Mammary epithelial cell (primary cell): ENCODE measurements at regions of chr10 and their contacts with region 1.

Region 1: GRCh38 chr10:99620713-99621453 is 644 bp upstream of the SLC25A28 start:
- DNase-seq: peak; percentile 95
- H3K4me3 ChIP-seq: peak overlapping the region; percentile 59 to 76 (median 66)
- H3K27ac ChIP-seq: peak overlapping the region; percentile 96
- H3K4me1 ChIP-seq: peaks cover 22% of the 10 kb centered on the region
- H3K27me3 ChIP-seq: no peaks in the 10 kb centered on the region
- CTCF ChIP-seq: peak in 1 of 2 donors; percentile 11

Region 2: GRCh38 chr10:99497343-99498025 is 123.4 kb before region 1 on chr10:
- CTCF ChIA-PET with region 1: no interaction called
- dilution Hi-C with region 1: no loop called
- in situ Hi-C with region 1: no loop called
- intact Hi-C with region 1: no loop called
- DNase-seq: no peak
- H3K4me3 ChIP-seq: no peak overlapping the region
- H3K27ac ChIP-seq: no peak overlapping the region
- H3K4me1 ChIP-seq: no peaks in the 10 kb centered on the region
- H3K27me3 ChIP-seq: no peaks in the 10 kb centered on the region
- CTCF ChIP-seq: no peak

Region 3: GRCh38 chr10:99659031-99659867 is 38.4 kb after region 1 on chr10 and contains the start of gene ENTPD7:
- CTCF ChIA-PET with region 1: no interaction called
- dilution Hi-C with region 1: no loop called
- in situ Hi-C with region 1: loop called in 1 of 2 experiments (anchors 5 kb)
- intact Hi-C with region 1: loop called (anchors 1 kb)
- DNase-seq: peak; percentile 98
- H3K4me3 ChIP-seq: peak within 1 kb of the TSS; percentile 84 to 97 (median 94)
- H3K27ac ChIP-seq: peak within 1 kb of the TSS; percentile 95
- H3K4me1 ChIP-seq: peaks cover 64% of the 10 kb centered on the region
- H3K27me3 ChIP-seq: no peaks in the 10 kb centered on the region
- CTCF ChIP-seq: peak in 1 of 2 donors; percentile 27
- total RNA-seq, gene ENTPD7: 23.2 to 47.2 TPM

Region 4: DNA sequence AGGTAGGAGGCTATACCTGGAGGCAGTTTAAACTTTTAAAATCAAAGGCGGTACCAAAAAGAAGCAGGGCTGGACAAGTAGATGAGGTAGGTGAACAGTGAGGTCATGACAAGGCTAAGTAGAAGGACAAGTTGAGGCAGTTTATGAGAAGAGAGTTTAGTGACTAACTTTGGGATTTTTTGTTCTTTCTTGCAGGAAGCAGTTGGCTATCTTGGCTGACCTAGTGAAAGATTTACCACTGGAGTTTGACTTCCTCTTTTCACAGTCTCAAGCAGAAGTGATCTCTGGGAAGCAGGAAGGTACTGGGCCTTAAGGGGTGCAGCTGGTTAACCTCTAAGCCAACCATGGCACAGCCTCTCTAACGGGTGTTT is 64.7 kb after region 1 on chr10:
- CTCF ChIA-PET with region 1: no interaction called
- dilution Hi-C with region 1: no loop called
- in situ Hi-C with region 1: no loop called
- intact Hi-C with region 1: loop called (anchors 1 kb)
- DNase-seq: peak; percentile 96
- H3K4me3 ChIP-seq: no peak overlapping the region
- H3K27ac ChIP-seq: peak overlapping the region; percentile 64
- H3K4me1 ChIP-seq: peaks cover 69% of the 10 kb centered on the region
- H3K27me3 ChIP-seq: no peaks in the 10 kb centered on the region
- CTCF ChIP-seq: no peak